Common myeloid progenitor, CD34-positive (primary cell): ENCODE measurements at regions of chr17 and their contacts with region 1.

Region 1: DNA sequence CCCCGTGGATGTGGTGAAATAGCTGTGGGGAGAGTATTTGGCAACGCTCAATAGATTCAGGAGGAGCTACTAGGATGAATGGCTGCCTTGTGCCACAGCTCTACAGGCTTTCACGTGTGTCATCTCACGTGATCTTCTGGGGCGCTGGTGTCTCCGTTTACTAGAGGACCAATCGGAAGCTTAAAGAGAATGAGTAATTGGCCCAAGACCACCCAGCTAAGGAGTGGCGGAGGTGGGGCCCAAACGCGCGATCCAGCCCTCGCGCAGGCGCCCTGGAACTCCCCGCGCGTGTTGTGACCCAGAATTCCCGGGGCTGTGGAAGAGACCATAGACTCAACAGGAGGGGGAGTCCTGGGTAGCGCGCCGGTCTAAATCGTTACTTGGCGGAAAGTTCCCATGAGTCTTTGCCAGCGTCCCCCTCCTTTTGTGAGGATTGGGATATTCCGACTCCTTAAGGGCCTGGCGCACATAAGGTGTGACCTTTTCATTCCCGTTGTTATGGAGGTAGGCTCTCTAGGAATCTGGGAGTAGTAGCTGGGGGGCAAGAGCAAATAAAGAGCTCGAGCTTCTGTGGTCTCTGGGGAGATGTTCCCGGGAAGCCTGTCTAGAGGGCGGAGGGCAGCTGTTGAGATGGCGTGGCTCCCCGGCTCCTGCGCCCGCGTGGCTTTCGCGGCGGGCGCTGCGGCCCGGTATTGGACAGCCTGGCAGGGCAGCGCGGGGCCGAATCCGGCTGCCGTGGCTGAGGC is 23.4 kb downstream of the TRPV2 start:
- DNase-seq: peak; percentile 99 to 100 (median 100)
- H3K4me3 ChIP-seq: peak overlapping the region; percentile 60 to 98 (median 90)
- H3K27ac ChIP-seq: peak overlapping the region; percentile 74 to 90
- H3K4me1 ChIP-seq: peaks cover 9 to 59% (median 46%) of the 10 kb centered on the region in 4 experiments
- H3K27me3 ChIP-seq: no peaks in the 10 kb centered on the region

Region 2: DNA sequence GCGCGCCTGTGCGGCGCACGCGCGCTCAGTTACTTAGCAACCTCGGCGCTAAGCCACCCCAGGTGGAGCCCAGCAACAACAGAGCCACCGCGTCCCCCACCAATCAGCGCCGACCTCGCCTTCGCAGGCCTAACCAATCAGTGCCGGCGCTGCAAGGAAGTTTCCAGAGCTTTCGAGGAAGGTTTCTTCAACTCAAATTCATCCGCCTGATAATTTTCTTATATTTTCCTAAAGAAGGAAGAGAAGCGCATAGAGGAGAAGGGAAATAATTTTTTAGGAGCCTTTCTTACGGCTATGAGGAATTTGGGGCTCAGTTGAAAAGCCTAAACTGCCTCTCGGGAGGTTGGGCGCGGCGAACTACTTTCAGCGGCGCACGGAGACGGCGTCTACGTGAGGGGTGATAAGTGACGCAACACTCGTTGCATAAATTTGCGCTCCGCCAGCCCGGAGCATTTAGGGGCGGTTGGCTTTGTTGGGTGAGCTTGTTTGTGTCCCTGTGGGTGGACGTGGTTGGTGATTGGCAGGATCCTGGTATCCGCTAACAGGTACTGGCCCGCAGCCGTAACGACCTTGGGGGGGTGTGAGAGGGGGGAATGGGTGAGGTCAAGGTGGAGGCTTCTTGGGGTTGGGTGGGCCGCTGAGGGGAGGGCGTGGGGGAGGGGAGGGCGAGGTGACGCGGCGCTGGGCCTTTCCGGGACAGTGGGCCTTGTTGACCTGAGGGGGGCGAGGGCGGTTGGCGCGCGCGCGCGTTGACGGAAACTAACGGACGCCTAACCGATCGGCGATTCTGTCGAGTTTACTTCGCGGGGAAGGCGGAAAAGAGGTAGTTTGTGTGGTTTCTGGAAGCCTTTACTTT is 57.9 kb before region 1 on chr17 and contains the start of gene UBB:
- CTCF ChIA-PET with region 1: no interaction called
- POLR2A ChIA-PET with region 1: interaction called, 10 read pairs
- DNase-seq: peak; percentile 98 to 99 (median 99)
- H3K4me3 ChIP-seq: peak within 1 kb of the TSS; percentile 40 to 96 (median 86)
- H3K27ac ChIP-seq: peak within 1 kb of the TSS; percentile 99 to 100
- H3K4me1 ChIP-seq: peaks cover 6 to 38% (median 23%) of the 10 kb centered on the region in 4 experiments
- H3K27me3 ChIP-seq: no peaks in the 10 kb centered on the region

Region 3: GRCh38 chr17:16428098-16428882 is 10.4 kb before region 1 on chr17:
- CTCF ChIA-PET with region 1: interaction called, 16 read pairs
- POLR2A ChIA-PET with region 1: interaction called, 5 read pairs
- DNase-seq: peak; percentile 41 to 67 (median 64)
- H3K4me3 ChIP-seq: no peak overlapping the region
- H3K27ac ChIP-seq: no peak overlapping the region
- H3K4me1 ChIP-seq: no peaks in the 10 kb centered on the region
- H3K27me3 ChIP-seq: no peaks in the 10 kb centered on the region

Region 4: GRCh38 chr17:16521070-16521727 is 82.5 kb after region 1 on chr17:
- CTCF ChIA-PET with region 1: interaction called, 68 read pairs
- POLR2A ChIA-PET with region 1: no interaction called
- DNase-seq: peak; percentile 88 to 95 (median 92)
- H3K4me3 ChIP-seq: peak overlapping the region in 1 of 7 experiments; percentile 6
- H3K27ac ChIP-seq: no peak overlapping the region
- H3K4me1 ChIP-seq: peaks cover 0 to 4% (median 3%) of the 10 kb centered on the region in 4 experiments
- H3K27me3 ChIP-seq: peaks cover 0 to 12% (median 0%) of the 10 kb centered on the region in 5 experiments